Activated T-helper 2 cell treated with anti-CD3 and anti-CD28 coated beads, Interferon-gamma antibody, Interleukin-2, Interleukin-4, amounts not matched to agents 10 μg/mL and 5 μg/mL and 100 μg/mL, durations not matched to agents 14 hours and 24 hours and 36 hours (primary cell): ENCODE measurements at regions of chr17 and their contacts with region 1.

Region 1: DNA sequence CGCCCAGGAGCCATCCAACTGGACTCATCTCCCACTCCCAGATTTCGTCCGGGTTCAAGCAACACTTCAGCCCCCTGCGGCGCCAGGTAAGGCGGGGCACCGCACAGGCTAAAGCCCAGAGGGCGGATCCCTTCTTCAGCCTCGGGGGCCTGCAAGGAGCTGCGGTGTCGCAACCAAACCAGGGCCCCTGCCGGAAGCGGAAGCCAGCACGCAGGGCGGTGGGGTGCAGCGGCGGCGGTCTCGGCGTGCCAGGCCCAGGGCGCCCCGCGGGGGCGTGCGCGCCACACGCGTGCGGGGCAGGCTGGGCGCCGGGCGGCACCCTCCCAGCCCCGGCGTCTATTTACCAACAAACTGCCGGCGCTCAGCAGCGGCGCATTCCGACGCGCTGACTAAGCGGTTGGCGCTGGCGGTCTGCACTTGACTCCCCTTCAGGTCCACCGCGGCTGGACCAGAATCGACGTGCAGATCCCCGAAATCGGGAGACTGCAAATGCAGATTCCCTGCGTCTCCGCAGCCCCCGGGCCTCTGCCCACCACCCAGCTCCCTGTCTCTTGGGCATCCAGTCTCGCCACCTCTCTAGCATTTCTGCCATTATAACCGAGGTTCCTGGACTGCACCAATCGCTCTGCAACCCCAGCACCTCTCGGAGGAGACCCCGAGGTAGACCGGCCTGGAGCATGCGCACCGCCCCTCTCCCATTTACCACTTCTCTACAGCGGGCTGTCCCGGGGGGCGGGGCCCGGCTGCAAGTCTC is 433 bp upstream of the DLX4 start:
- DNase-seq: peak; percentile 58
- H3K4me3 Mint-ChIP-seq: peak overlapping the region; percentile 82
- H3K27ac Mint-ChIP-seq: no peak overlapping the region
- H3K4me1 Mint-ChIP-seq: peaks cover 19% of the 10 kb centered on the region
- H3K27me3 Mint-ChIP-seq: peaks cover 88% of the 10 kb centered on the region

Region 2: DNA sequence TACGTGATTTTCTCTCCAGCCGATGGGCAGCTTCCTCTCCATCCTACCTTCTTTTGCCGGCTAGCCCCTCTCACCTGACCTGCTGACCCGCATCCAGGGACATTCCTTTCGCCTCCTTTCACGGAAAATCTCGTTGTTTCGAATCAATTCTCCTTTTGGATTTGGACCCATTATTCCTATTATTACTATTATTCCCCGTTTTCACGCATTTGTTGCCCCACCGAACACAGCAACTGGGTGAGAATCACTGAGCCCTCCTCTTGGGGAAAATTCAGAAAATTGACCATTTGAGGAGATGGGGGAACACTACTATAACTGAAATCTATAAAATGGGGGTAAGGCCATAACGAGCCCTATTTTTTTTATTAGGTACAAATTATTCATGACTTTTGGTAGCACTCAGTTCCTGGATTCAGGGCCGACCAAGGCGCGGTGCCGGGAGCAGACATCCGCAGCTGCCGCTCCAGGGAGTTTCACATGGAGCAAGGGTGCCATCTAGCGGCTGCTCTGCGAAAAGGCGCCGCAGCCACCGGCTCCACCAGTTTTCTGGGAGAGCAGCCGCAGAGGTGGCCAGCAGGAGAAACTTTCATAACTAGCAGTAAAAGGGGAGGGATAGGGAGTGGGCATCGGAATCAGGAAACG is 1350.2 kb before region 1 on chr17:
- intact Hi-C with region 1: loop called (anchors 10 kb)
- DNase-seq: peak; percentile 77
- H3K4me3 Mint-ChIP-seq: no peak overlapping the region
- H3K27ac Mint-ChIP-seq: peak overlapping the region; percentile 14
- H3K4me1 Mint-ChIP-seq: peaks cover 27% of the 10 kb centered on the region
- H3K27me3 Mint-ChIP-seq: peaks cover 87% of the 10 kb centered on the region

Region 3: GRCh38 chr17:48724251-48725003 is 1244.1 kb before region 1 on chr17:
- intact Hi-C with region 1: loop called (anchors 5 kb)
- DNase-seq: peak; percentile 68
- H3K4me3 Mint-ChIP-seq: no peak overlapping the region
- H3K27ac Mint-ChIP-seq: no peak overlapping the region
- H3K4me1 Mint-ChIP-seq: peaks cover 12% of the 10 kb centered on the region
- H3K27me3 Mint-ChIP-seq: peaks cover 89% of the 10 kb centered on the region

Region 4: DNA sequence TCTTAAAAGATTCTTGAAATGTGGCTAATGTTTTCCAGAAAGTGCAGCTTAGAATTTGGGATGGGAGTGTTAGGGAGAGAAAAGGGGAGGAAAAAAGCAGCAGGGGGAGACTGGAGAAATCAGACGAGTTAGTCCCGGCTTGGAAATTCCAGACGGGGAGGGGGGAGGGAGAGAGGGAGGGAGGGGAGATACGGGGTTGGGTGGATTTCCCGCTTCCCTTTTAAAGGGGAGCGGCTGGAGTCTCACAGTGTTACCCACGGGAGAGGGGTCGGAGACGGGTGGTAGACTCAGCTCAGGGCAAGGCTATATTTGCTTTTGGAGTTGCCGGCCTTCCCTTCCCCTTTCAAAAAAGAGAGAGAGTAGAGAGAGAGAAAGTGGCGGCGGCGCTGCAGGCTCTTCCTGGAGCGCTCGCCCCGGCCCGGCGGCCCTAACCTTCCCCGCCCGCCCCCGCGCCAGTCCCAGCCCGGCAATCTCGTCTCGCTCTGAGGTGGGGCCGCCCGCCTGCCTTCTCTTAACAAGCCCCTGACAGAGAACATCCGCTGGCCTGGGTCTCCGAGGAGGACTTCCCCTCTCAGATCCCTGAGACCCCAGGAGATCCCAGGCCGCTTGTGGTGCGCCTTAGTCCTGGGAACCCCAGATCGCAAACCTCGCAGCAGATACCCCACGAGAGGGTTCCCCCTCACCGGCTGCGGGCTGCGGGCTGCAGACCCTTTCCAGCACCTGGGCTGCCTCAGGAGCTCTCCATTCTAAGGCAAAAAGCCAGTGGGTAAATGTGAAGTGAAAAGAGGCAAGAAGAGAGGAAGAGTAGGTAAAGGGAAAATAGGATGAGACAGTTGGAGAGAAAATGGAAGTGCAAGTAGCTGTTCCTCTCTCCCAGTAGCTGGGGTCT is 964.7 kb before region 1 on chr17:
- intact Hi-C with region 1: loop called (anchors 5 kb)
- DNase-seq: no peak
- H3K4me3 Mint-ChIP-seq: no peak overlapping the region
- H3K27ac Mint-ChIP-seq: no peak overlapping the region
- H3K4me1 Mint-ChIP-seq: no peaks in the 10 kb centered on the region
- H3K27me3 Mint-ChIP-seq: peaks cover 82% of the 10 kb centered on the region

Region 5: DNA sequence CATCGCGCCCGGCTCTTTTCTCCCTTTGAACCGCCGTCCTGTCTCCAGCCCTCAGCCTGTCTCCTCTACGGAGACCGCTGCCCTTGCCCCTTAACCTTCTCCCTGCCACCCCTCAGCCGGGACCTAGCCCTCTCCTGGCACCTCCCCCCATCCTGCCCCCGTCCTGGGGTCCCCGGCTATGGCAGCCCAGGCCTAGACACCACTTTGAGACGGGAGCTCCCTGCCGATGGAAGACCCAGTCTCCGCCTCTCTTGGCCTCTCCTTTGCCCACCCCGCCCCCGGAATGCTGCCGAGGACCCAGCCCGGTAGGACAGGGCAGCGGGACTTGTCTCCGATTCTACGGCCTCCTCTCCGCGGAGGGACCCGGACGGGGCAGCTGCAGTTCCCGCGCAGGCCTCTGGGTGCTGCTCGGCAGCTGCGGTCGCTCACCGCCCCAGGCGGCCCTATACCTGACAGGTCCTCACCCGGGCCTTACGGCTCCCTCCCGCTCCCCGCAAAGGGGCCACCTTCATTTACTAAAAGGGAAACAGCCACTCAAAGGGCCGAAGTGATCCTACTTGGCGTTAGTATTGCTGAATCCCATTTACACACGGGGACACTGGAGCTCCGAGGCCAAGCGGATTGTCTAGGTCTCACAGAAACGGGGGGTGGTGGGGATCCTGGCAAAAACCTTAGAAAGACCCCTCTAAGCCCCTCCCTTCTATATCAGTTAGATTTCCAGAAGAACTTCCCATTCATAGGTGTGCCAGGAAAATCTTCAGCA is 88.1 kb before region 1 on chr17:
- intact Hi-C with region 1: no loop called
- DNase-seq: peak; percentile 63
- H3K4me3 Mint-ChIP-seq: peak overlapping the region; percentile 8
- H3K27ac Mint-ChIP-seq: no peak overlapping the region
- H3K4me1 Mint-ChIP-seq: peaks cover 5% of the 10 kb centered on the region
- H3K27me3 Mint-ChIP-seq: peaks cover 31% of the 10 kb centered on the region

Region 6: GRCh38 chr17:49899191-49899485 is 69.4 kb before region 1 on chr17:
- intact Hi-C with region 1: no loop called
- DNase-seq: no peak
- H3K4me3 Mint-ChIP-seq: no peak overlapping the region
- H3K27ac Mint-ChIP-seq: no peak overlapping the region
- H3K4me1 Mint-ChIP-seq: no peaks in the 10 kb centered on the region
- H3K27me3 Mint-ChIP-seq: peaks cover 51% of the 10 kb centered on the region

Region 7: DNA sequence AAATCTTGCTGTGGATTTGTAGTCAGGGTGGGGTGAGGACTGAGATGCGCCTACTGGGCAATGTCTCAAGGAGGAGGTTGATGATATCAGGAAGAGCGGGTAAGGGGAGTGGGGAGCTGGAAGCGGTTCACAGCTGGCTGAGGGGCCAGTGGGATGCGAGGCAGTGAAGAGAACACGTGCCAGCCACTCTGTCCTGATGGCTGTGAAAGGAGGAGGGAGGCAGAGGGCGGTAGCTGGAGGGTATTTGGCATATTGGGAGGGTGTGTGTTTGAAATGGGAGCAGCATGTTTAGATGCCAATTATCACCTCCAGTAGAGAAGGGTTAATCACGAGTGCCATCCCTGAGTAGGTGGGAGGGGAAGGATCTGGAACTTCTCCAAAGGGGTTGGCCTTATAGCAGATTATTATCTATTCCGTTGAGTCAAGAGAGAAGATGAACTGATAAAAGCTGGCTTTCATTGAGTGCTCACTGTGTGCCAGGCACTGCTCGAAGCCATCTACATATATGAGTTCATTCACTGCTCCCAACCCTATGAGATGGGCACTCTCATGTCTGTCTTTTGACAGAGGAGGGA is 32.7 kb after region 1 on chr17:
- intact Hi-C with region 1: no loop called
- DNase-seq: no peak
- H3K4me3 Mint-ChIP-seq: no peak overlapping the region
- H3K27ac Mint-ChIP-seq: no peak overlapping the region
- H3K4me1 Mint-ChIP-seq: peaks cover 9% of the 10 kb centered on the region
- H3K27me3 Mint-ChIP-seq: peaks cover 41% of the 10 kb centered on the region